ENCODE measurements at regions of chr19 and their contacts with region 1.

Region 1: GRCh38 chr19:4352701-4353121 is 9.3 kb downstream of the MPND start:
- DNase-seq: peak; percentile 76
- ATAC-seq: peak; percentile 69
- H3K4me3 Mint-ChIP-seq: no peak overlapping the region
- H3K27ac Mint-ChIP-seq: no peak overlapping the region
- H3K4me1 Mint-ChIP-seq: peaks cover 1% of the 10 kb centered on the region
- H3K27me3 Mint-ChIP-seq: no peaks in the 10 kb centered on the region

Region 2: GRCh38 chr19:4278419-4279266 is 74.1 kb before region 1 on chr19 and contains the start of gene SHD:
- CTCF ChIA-PET with region 1: interaction called, 10 read pairs
- DNase-seq: no peak
- ATAC-seq: no peak
- H3K4me3 Mint-ChIP-seq: no peak within 1 kb of the TSS
- H3K27ac Mint-ChIP-seq: no peak within 1 kb of the TSS
- H3K4me1 Mint-ChIP-seq: peaks cover 4% of the 10 kb centered on the region
- H3K27me3 Mint-ChIP-seq: peaks cover 35% of the 10 kb centered on the region
- total RNA-seq, gene SHD: not detected

Region 3: GRCh38 chr19:4362861-4363510 is 10.3 kb after region 1 on chr19:
- CTCF ChIA-PET with region 1: interaction called, 19 read pairs
- DNase-seq: no peak
- ATAC-seq: peak; percentile 26
- H3K4me3 Mint-ChIP-seq: no peak overlapping the region
- H3K27ac Mint-ChIP-seq: no peak overlapping the region
- H3K4me1 Mint-ChIP-seq: peaks cover 5% of the 10 kb centered on the region
- H3K27me3 Mint-ChIP-seq: no peaks in the 10 kb centered on the region

Region 4: DNA sequence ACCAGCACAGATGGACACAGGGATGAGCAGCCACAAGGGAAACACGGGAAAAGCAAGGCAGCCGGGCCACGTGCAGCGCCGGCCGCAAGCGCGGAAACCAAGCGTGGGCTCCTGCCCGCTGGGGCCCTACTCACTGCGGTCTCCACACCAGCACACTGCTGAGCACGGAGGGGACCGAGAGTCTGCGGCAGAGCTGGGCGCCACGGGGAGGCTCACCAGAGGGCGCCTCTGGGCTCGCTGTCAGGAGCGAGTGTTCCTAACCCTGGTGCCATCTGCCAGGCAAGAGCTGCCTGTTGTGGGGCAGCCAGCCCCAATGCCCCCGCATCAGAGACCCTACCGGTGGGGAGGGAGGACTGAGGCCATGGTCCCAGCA is 17.2 kb after region 1 on chr19:
- CTCF ChIA-PET with region 1: interaction called, 19 read pairs
- DNase-seq: peak; percentile 89
- ATAC-seq: peak; percentile 80
- H3K4me3 Mint-ChIP-seq: peak overlapping the region; percentile 66
- H3K27ac Mint-ChIP-seq: peak overlapping the region; percentile 93
- H3K4me1 Mint-ChIP-seq: peaks cover 60% of the 10 kb centered on the region
- H3K27me3 Mint-ChIP-seq: no peaks in the 10 kb centered on the region

Measured in activated CD8-positive, alpha-beta memory T cell treated with anti-CD3 and anti-CD28 coated beads, Interleukin-2, amount 10 ng/mL, durations not matched to agents 7 days and 5 days (primary cell).